ENCODE measurements at regions of chr6 and their contacts with region 1.

Region 1: GRCh38 chr6:117482240-117483003 is at the start of gene DCBLD1:
- DNase-seq: no peak
- ATAC-seq: peak; percentile 86
- H3K4me3 ChIP-seq: peak within 1 kb of the TSS; percentile 81
- H3K27ac ChIP-seq: peak within 1 kb of the TSS; percentile 66
- H3K4me1 ChIP-seq: peaks cover 19% of the 10 kb centered on the region
- H3K27me3 ChIP-seq: no peaks in the 10 kb centered on the region
- CTCF ChIP-seq: 0 out of 6 replicates have a peak, but pooled peaks of 1 of the 3 experiments have one; percentile 3
- EP300 ChIP-seq: no peak
- POLR2A ChIP-seq: peak; percentile 69
- RAD21 ChIP-seq: no peak
- polyA plus RNA-seq, gene DCBLD1: 0.92 to 2.6 TPM

Region 2: DNA sequence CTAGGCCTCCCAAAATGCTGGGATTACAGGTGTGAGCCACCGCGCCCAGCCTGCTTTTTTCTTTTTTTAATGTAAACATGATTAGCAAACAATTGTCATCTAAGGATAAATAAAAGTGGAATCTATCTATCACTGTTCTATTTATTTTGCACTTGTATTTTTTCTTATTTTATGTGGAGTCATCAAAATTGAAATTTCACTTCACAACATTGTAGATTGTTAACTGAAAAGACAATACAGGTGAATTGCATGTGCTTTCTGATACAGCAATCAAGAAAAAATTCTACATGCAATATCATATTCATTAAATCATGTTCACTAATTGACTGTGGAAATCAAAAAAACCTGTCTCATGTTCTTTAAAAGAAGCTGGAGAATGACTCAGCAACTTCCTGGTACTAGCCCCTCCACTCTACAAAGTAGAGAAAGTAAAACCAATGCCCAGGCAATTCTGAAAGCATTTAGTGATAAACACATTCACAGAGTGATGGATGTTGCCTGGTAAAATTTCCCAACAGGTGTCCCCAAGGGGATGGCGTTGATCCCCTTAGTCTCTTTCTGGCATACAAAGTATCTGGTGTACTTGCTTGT is 616.0 kb before region 1 on chr6:
- CTCF ChIA-PET with region 1: no interaction called
- POLR2A ChIA-PET with region 1: no interaction called
- RAD21 ChIA-PET with region 1: no interaction called
- SMC1A ChIA-PET with region 1: no interaction called
- in situ Hi-C with region 1: no loop called
- intact Hi-C with region 1: no loop called
- DNase-seq: peak; percentile 5
- ATAC-seq: peak; percentile 86
- H3K4me3 ChIP-seq: no peak overlapping the region
- H3K27ac ChIP-seq: no peak overlapping the region
- H3K4me1 ChIP-seq: no peaks in the 10 kb centered on the region
- H3K27me3 ChIP-seq: no peaks in the 10 kb centered on the region
- CTCF ChIP-seq: no peak
- EP300 ChIP-seq: no peak
- POLR2A ChIP-seq: no peak
- RAD21 ChIP-seq: no peak

Region 3: GRCh38 chr6:117449549-117450439 is 32.6 kb before region 1 on chr6:
- CTCF ChIA-PET with region 1: interaction called, 59 read pairs
- POLR2A ChIA-PET with region 1: no interaction called
- RAD21 ChIA-PET with region 1: interaction called, 11 read pairs
- SMC1A ChIA-PET with region 1: interaction called, 9 read pairs
- in situ Hi-C with region 1: no loop called
- intact Hi-C with region 1: no loop called
- DNase-seq: peak; percentile 12
- ATAC-seq: peak; percentile 62
- H3K4me3 ChIP-seq: no peak overlapping the region
- H3K27ac ChIP-seq: no peak overlapping the region
- H3K4me1 ChIP-seq: no peaks in the 10 kb centered on the region
- H3K27me3 ChIP-seq: no peaks in the 10 kb centered on the region
- CTCF ChIP-seq: peak; percentile 59 to 68 (median 59); a peak in 5 of 6 replicates
- EP300 ChIP-seq: no peak
- POLR2A ChIP-seq: no peak
- RAD21 ChIP-seq: peak; percentile 86

Region 4: GRCh38 chr6:117498159-117498558 is 15.7 kb after region 1 on chr6:
- CTCF ChIA-PET with region 1: interaction called, 12 read pairs
- POLR2A ChIA-PET with region 1: interaction called, 10 read pairs
- RAD21 ChIA-PET with region 1: interaction called, 23 read pairs
- SMC1A ChIA-PET with region 1: interaction called, 76 read pairs
- in situ Hi-C with region 1: no loop called
- intact Hi-C with region 1: loop called (anchors 1 kb)
- DNase-seq: no peak
- ATAC-seq: peak; percentile 68
- H3K4me3 ChIP-seq: no peak overlapping the region
- H3K27ac ChIP-seq: no peak overlapping the region
- H3K4me1 ChIP-seq: peaks cover 10% of the 10 kb centered on the region
- H3K27me3 ChIP-seq: no peaks in the 10 kb centered on the region
- CTCF ChIP-seq: no peak
- EP300 ChIP-seq: no peak; a peak in 1 of 4 replicates
- POLR2A ChIP-seq: no peak
- RAD21 ChIP-seq: no peak

Region 5: DNA sequence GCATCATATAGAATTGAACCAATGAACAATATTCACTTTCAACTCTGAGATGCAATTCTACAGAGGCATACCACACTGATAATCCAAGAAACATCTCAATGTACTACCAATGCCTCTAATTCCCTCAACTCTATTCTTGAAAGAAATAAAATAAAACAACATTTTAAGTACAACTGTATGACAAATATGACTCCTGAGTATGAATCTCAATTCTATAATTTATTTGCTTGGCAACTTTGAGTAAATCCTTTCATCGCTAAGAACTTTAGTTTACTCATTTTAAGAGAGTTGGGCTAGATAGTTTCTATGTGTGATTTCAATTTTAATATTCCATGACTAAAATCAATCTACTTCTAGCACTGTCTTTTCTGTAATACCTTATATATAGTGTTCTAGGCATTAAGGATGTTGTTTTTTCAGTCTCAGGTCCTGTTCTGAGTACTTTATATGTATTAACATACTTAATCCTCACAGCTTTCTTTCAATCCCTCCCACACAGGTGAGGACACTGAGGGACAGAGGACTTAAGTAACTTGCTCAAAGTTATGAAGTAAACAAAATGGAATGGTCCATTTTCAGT is 86.5 kb after region 1 on chr6:
- CTCF ChIA-PET with region 1: interaction called, 21 read pairs
- POLR2A ChIA-PET with region 1: no interaction called
- RAD21 ChIA-PET with region 1: interaction called, 4 read pairs
- SMC1A ChIA-PET with region 1: interaction called, 8 read pairs
- in situ Hi-C with region 1: no loop called
- intact Hi-C with region 1: no loop called
- DNase-seq: no peak
- ATAC-seq: no peak
- H3K4me3 ChIP-seq: no peak overlapping the region
- H3K27ac ChIP-seq: no peak overlapping the region
- H3K4me1 ChIP-seq: no peaks in the 10 kb centered on the region
- H3K27me3 ChIP-seq: no peaks in the 10 kb centered on the region
- CTCF ChIP-seq: no peak
- EP300 ChIP-seq: no peak
- POLR2A ChIP-seq: no peak
- RAD21 ChIP-seq: no peak

Region 6: GRCh38 chr6:117674991-117675657 is 192.7 kb after region 1 on chr6 and contains the start of gene NUS1:
- CTCF ChIA-PET with region 1: interaction called, 4 read pairs
- POLR2A ChIA-PET with region 1: no interaction called
- RAD21 ChIA-PET with region 1: no interaction called
- SMC1A ChIA-PET with region 1: no interaction called
- in situ Hi-C with region 1: no loop called
- intact Hi-C with region 1: loop called (anchors 5 kb)
- DNase-seq: peak; percentile 88
- ATAC-seq: peak; percentile 94
- H3K4me3 ChIP-seq: peak within 1 kb of the TSS; percentile 86
- H3K27ac ChIP-seq: peak within 1 kb of the TSS; percentile 82
- H3K4me1 ChIP-seq: no peaks in the 10 kb centered on the region
- H3K27me3 ChIP-seq: no peaks in the 10 kb centered on the region
- CTCF ChIP-seq: peak; percentile 81 to 93 (median 81); a peak in 5 of 6 replicates
- EP300 ChIP-seq: no peak
- POLR2A ChIP-seq: peak; percentile 56
- RAD21 ChIP-seq: no peak
- polyA plus RNA-seq, gene NUS1: 16.7 to 22.0 TPM

Region 7: GRCh38 chr6:119201480-119201879 is 1719.1 kb after region 1 on chr6:
- CTCF ChIA-PET with region 1: no interaction called
- POLR2A ChIA-PET with region 1: no interaction called
- RAD21 ChIA-PET with region 1: no interaction called
- SMC1A ChIA-PET with region 1: no interaction called
- in situ Hi-C with region 1: no loop called
- intact Hi-C with region 1: no loop called
- DNase-seq: no peak
- ATAC-seq: no peak
- H3K4me3 ChIP-seq: no peak overlapping the region
- H3K27ac ChIP-seq: no peak overlapping the region
- H3K4me1 ChIP-seq: no peaks in the 10 kb centered on the region
- H3K27me3 ChIP-seq: no peaks in the 10 kb centered on the region
- CTCF ChIP-seq: no peak
- EP300 ChIP-seq: no peak
- POLR2A ChIP-seq: no peak
- RAD21 ChIP-seq: no peak

Measured in GM12878 (cell line).